ENCODE measurements at regions of chrX and their contacts with region 1.

Region 1: GRCh38 chrX:77899081-77899828 is at the start of gene COX7B:
- DNase-seq: peak; percentile 71
- ATAC-seq: peak; percentile 70
- H3K4me3 Mint-ChIP-seq: peak within 1 kb of the TSS; percentile 96
- H3K27ac Mint-ChIP-seq: peak within 1 kb of the TSS; percentile 97
- H3K4me1 Mint-ChIP-seq: peaks cover 20% of the 10 kb centered on the region
- H3K27me3 Mint-ChIP-seq: no peaks in the 10 kb centered on the region
- total RNA-seq, gene COX7B: 303 to 375 TPM

Region 2: GRCh38 chrX:76172325-76172893 is 1726.8 kb before region 1 on chrX:
- CTCF ChIA-PET with region 1: no interaction called
- POLR2A ChIA-PET with region 1: no interaction called
- intact Hi-C with region 1: loop called in 1 of 2 experiments (anchors 5 kb)
- DNase-seq: no peak
- ATAC-seq: peak; percentile 70
- H3K4me3 Mint-ChIP-seq: peak overlapping the region; percentile 87
- H3K27ac Mint-ChIP-seq: peak overlapping the region; percentile 97
- H3K4me1 Mint-ChIP-seq: peaks cover 49% of the 10 kb centered on the region
- H3K27me3 Mint-ChIP-seq: no peaks in the 10 kb centered on the region

Region 3: GRCh38 chrX:77446029-77446585 is 453.1 kb before region 1 on chrX:
- CTCF ChIA-PET with region 1: no interaction called
- POLR2A ChIA-PET with region 1: no interaction called
- intact Hi-C with region 1: loop called in 1 of 2 experiments (anchors 5 kb)
- DNase-seq: peak; percentile 55
- ATAC-seq: peak; percentile 33
- H3K4me3 Mint-ChIP-seq: peak overlapping the region; percentile 66
- H3K27ac Mint-ChIP-seq: no peak overlapping the region
- H3K4me1 Mint-ChIP-seq: peaks cover 11% of the 10 kb centered on the region
- H3K27me3 Mint-ChIP-seq: peaks cover 22% of the 10 kb centered on the region

Region 4: GRCh38 chrX:77910108-77910840 is 11.0 kb after region 1 on chrX and contains the start of gene ATP7A:
- CTCF ChIA-PET with region 1: interaction called, 15 read pairs
- POLR2A ChIA-PET with region 1: interaction called, 9 read pairs
- intact Hi-C with region 1: loop called (anchors 1 kb)
- DNase-seq: peak; percentile 94
- ATAC-seq: peak; percentile 94
- H3K4me3 Mint-ChIP-seq: peak within 1 kb of the TSS; percentile 85
- H3K27ac Mint-ChIP-seq: peak within 1 kb of the TSS; percentile 99
- H3K4me1 Mint-ChIP-seq: peaks cover 13% of the 10 kb centered on the region
- H3K27me3 Mint-ChIP-seq: no peaks in the 10 kb centered on the region
- total RNA-seq, gene ATP7A: 9.5 to 9.7 TPM

Region 5: GRCh38 chrX:78024349-78025108 is 125.3 kb after region 1 on chrX:
- CTCF ChIA-PET with region 1: interaction called, 15 read pairs
- POLR2A ChIA-PET with region 1: interaction called, 3 read pairs
- intact Hi-C with region 1: no loop called
- DNase-seq: peak; percentile 28
- ATAC-seq: peak; percentile 65
- H3K4me3 Mint-ChIP-seq: no peak overlapping the region
- H3K27ac Mint-ChIP-seq: no peak overlapping the region
- H3K4me1 Mint-ChIP-seq: peaks cover 3% of the 10 kb centered on the region
- H3K27me3 Mint-ChIP-seq: no peaks in the 10 kb centered on the region

Region 6: DNA sequence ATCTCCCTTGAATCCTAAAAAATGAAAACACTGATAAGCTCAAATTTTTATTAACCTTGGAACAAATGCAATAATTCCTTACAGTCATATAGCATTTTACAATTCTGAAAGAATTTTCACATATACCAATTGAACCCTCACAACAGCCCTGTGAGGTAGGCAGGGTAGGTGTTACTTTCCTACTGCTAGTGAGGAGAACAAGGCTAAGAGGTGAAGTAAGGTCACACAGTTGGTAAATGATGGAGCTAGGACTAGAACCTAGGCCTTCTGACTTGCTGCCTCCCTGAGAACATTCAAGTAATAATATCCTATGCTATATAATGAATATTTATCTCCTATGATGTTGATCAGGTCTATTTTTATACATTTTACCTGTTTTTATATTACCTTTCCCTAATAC is 230.5 kb after region 1 on chrX:
- CTCF ChIA-PET with region 1: no interaction called
- POLR2A ChIA-PET with region 1: no interaction called
- intact Hi-C with region 1: no loop called
- DNase-seq: no peak
- ATAC-seq: peak; percentile 42
- H3K4me3 Mint-ChIP-seq: no peak overlapping the region
- H3K27ac Mint-ChIP-seq: peak overlapping the region; percentile 25
- H3K4me1 Mint-ChIP-seq: peaks cover 4% of the 10 kb centered on the region
- H3K27me3 Mint-ChIP-seq: no peaks in the 10 kb centered on the region